ENCODE measurements at regions of chr4 and their contacts with region 1.

Region 1: DNA sequence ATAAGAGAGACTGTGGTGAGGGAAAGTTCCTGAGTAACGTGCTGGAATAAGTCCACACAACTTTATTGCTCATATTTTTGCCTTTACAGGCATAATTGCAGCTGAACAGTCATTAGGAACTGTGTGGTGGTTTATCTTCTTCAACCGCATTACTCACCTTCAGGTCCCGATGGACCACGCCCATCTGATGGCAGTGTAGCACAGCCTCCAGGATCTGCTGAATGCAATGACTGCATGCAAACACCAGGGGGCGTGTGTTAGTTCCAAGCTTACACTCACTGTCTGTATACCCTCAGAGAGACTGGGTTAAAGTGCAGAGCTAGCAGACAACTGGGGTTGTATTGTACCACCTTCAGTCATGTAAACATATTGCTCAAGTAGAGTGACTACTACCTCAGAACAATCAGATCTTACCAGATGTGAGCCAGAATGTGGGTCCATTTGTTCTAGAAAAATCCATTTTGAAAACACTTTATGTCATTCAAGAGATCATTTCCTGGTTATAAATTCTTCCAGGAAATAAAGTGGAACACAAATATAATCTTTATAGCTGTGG is 214.0 kb downstream of the CAMK2D start:
- DNase-seq: peak; percentile 74 to 88
- ATAC-seq: peak; percentile 93 to 99 (median 98)
- H3K4me3 ChIP-seq: no peak overlapping the region
- H3K27ac ChIP-seq: peak overlapping the region in 9 of 10 donors; percentile 20 to 74 (median 47)
- H3K4me1 ChIP-seq: peaks cover 0 to 22% (median 13%) of the 10 kb centered on the region in 9 donors
- H3K27me3 ChIP-seq: no peaks in the 10 kb centered on the region
- CTCF ChIP-seq: peak; percentile 87 to 99 (median 98)

Region 2: GRCh38 chr4:113404841-113405240 is 142.7 kb before region 1 on chr4:
- intact Hi-C with region 1: loop called in 1 of 10 experiments (anchors 10 kb)
- DNase-seq: peak in 1 of 2 donors; percentile 18
- ATAC-seq: peak in 7 of 8 donors; percentile 35 to 79 (median 52)
- H3K4me3 ChIP-seq: no peak overlapping the region
- H3K27ac ChIP-seq: peak overlapping the region in 1 of 10 donors; percentile 3
- H3K4me1 ChIP-seq: peaks cover 0 to 12% (median 0%) of the 10 kb centered on the region in 9 donors
- H3K27me3 ChIP-seq: no peaks in the 10 kb centered on the region
- CTCF ChIP-seq: no peak

Region 3: GRCh38 chr4:113618205-113618604 is 70.6 kb after region 1 on chr4:
- intact Hi-C with region 1: loop called in 2 of 10 experiments (anchors 2 to 10 kb)
- DNase-seq: no peak
- ATAC-seq: peak in 3 of 8 donors; percentile 39 to 56 (median 40)
- H3K4me3 ChIP-seq: no peak overlapping the region
- H3K27ac ChIP-seq: peak overlapping the region in 7 of 10 donors; percentile 4 to 62 (median 51)
- H3K4me1 ChIP-seq: peaks cover 0 to 82% (median 42%) of the 10 kb centered on the region in 9 donors
- H3K27me3 ChIP-seq: no peaks in the 10 kb centered on the region
- CTCF ChIP-seq: no peak

Region 4: DNA sequence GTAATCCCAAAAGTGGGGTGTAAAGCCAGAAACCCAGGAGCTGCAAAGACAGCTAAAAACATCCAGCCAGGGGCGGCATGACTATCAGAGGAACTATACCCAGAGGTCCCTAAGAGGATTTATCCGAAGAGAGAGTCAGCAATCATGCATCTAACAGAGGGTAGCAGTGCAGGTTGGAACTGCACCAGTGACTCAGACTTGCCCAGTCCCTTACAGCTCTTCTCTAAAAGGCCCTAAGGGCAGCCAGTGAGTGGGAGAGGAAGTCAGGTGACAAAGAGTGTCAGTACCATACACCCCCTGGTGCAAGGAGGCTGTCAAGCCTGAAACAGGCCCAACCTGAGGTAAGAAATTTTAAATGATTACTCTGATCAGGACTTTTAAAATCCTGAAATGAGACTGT is 125.9 kb after region 1 on chr4:
- intact Hi-C with region 1: loop called in 2 of 10 experiments (anchors 10 kb)
- DNase-seq: no peak
- ATAC-seq: peak in 4 of 8 donors; percentile 33 to 70 (median 50)
- H3K4me3 ChIP-seq: no peak overlapping the region
- H3K27ac ChIP-seq: peak overlapping the region in 3 of 10 donors; percentile 0 to 21 (median 12)
- H3K4me1 ChIP-seq: peaks cover 0 to 70% (median 54%) of the 10 kb centered on the region in 9 donors
- H3K27me3 ChIP-seq: no peaks in the 10 kb centered on the region
- CTCF ChIP-seq: no peak